ENCODE measurements at regions of chr10 and their contacts with region 1.

Region 1: GRCh38 chr10:100046021-100046486 is 35.6 kb downstream of the CPN1 start:
- DNase-seq: peak; percentile 85 to 93 (median 90)
- H3K4me3 ChIP-seq: no peak overlapping the region
- H3K27ac ChIP-seq: peak overlapping the region in 1 of 2 donors; percentile 1
- H3K4me1 ChIP-seq: peaks cover 7% of the 10 kb centered on the region
- H3K27me3 ChIP-seq: no peaks in the 10 kb centered on the region
- CTCF ChIP-seq: peak; percentile 85 to 96 (median 88)
- EP300 ChIP-seq: no peak
- POLR2A ChIP-seq: no peak

Region 2: GRCh38 chr10:99845837-99846382 is 200.1 kb before region 1 on chr10:
- intact Hi-C with region 1: loop called in 3 of 4 experiments (anchors 2 to 5 kb)
- DNase-seq: peak; percentile 61 to 88 (median 74)
- H3K4me3 ChIP-seq: no peak overlapping the region
- H3K27ac ChIP-seq: peak overlapping the region in 1 of 2 donors; percentile 27
- H3K4me1 ChIP-seq: no peaks in the 10 kb centered on the region
- H3K27me3 ChIP-seq: no peaks in the 10 kb centered on the region
- CTCF ChIP-seq: peak; percentile 91 to 96 (median 95)
- EP300 ChIP-seq: no peak
- POLR2A ChIP-seq: no peak

Region 3: GRCh38 chr10:99854860-99855259 is 191.2 kb before region 1 on chr10:
- intact Hi-C with region 1: loop called in 1 of 4 experiments (anchors 2 kb)
- DNase-seq: peak; percentile 35 to 63 (median 41)
- H3K4me3 ChIP-seq: no peak overlapping the region
- H3K27ac ChIP-seq: no peak overlapping the region
- H3K4me1 ChIP-seq: no peaks in the 10 kb centered on the region
- H3K27me3 ChIP-seq: no peaks in the 10 kb centered on the region
- CTCF ChIP-seq: peak; percentile 33 to 60 (median 54)
- EP300 ChIP-seq: no peak
- POLR2A ChIP-seq: no peak

Region 4: DNA sequence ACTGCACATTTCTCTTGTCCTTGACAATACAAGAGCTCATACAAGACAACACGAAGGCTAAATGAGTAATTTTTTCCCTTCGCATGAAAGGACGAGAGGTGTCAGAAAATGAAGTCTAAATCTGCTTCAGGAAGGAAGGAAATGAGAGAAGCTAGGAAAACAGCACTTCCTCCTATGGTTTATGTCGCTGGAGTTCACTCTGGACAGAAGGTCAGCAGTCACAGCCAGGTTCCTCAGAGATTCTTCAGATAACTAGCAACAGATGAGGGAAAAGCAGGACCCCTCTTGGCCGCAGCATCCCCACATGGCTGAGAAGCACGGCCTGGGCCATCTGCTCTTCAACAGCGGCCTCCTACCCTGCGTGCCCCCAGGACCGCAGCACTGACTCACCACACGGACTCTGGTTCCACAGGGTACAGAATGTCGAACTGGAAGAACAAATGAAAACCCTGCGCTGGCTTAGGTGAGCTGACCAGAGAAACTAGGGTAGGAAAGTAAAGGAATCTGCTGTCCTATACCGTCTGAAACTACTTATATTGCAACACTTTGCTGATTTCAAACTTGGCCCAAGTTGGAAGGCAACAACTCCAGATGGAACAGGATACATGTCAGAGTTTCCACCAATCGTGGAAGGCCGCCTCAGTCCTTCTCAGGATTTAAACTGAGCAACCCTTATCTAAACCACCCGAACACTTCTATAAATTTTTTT is 62.6 kb before region 1 on chr10:
- intact Hi-C with region 1: no loop called
- DNase-seq: peak; percentile 57 to 70 (median 62)
- H3K4me3 ChIP-seq: peak overlapping the region; percentile 8
- H3K27ac ChIP-seq: peak overlapping the region; percentile 83 to 89
- H3K4me1 ChIP-seq: peaks cover 25% of the 10 kb centered on the region
- H3K27me3 ChIP-seq: no peaks in the 10 kb centered on the region
- CTCF ChIP-seq: no peak
- EP300 ChIP-seq: no peak
- POLR2A ChIP-seq: no peak

Region 5: DNA sequence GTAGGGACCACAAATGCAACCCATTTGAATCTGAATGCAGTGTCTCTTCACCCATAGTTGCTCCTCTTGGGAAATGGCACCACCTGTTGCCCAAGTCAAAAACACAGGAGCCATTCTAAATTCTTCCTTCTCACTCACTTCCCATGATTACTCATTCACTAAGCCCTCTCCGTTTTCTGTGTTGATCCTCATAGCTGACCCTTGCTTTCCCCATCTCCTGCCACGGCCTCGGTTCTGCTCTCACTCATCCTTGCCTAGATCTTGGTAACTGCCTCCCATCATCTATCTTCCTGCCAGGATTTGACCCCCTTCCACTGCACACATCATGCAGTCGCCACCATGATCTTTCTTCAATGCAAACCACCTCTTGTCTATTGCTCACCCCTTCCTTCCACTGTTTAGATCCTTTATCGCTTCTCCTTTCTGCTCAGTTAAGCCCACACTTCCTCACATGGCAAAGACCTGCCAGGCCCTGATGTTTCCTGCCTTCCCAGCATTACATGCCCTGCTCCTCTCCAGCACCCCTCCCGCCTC is 54.7 kb after region 1 on chr10:
- intact Hi-C with region 1: no loop called
- DNase-seq: no peak
- H3K4me3 ChIP-seq: no peak overlapping the region
- H3K27ac ChIP-seq: no peak overlapping the region
- H3K4me1 ChIP-seq: no peaks in the 10 kb centered on the region
- H3K27me3 ChIP-seq: no peaks in the 10 kb centered on the region
- CTCF ChIP-seq: no peak
- EP300 ChIP-seq: no peak
- POLR2A ChIP-seq: no peak

Measured in ovary (tissue), 10 donors.